ENCODE measurements at regions of chr10 and their contacts with region 1.

Region 1: DNA sequence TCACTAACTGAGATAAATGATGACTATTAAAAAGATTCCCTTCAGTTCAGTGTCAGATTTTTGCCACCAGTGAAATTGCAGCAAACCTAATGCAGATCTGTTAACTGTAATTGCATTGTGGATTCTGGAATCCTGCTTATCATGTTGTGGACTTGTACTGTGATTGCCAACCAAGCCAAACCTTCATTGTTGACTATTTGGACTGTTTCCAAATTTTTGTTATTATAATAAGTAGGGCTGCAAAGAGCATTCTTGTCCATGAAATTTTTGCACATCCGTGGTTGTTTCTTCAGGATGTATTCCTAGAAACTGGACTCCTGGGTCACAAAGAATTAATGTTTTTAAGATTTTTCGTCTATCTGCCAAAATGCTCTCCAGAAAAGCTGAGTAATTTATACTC is 281.6 kb upstream of the ZMIZ1 start:
- DNase-seq: no peak
- H3K4me3 ChIP-seq: no peak overlapping the region
- H3K27me3 ChIP-seq: no peaks in the 10 kb centered on the region
- CTCF ChIP-seq: no peak

Region 2: GRCh38 chr10:78802866-78803265 is 15.7 kb after region 1 on chr10:
- CTCF ChIA-PET with region 1: interaction called, 15 read pairs
- POLR2A ChIA-PET with region 1: interaction called, 16 read pairs
- DNase-seq: peak; percentile 60
- H3K4me3 ChIP-seq: no peak overlapping the region
- H3K27me3 ChIP-seq: peaks cover 8% of the 10 kb centered on the region
- CTCF ChIP-seq: no peak

Region 3: DNA sequence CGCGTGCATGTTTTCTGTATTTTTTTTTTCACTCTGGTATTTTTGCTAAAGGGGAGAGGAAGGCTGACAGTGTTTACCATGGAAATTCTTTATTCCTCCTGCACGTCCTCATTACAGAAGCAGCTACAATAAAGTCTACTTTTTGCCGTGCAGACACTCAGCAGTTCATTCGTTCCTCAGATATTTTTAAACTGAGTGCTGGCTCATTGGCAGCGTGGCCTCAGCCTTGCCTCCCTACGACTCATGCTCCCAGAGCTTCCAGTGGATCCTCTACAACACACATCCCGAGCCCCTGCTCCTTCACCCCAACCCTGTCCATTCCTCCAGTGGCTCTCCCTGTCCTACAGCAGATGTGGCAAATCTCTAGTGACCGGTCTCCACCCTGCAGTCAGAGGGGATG is 42.4 kb after region 1 on chr10:
- CTCF ChIA-PET with region 1: no interaction called
- POLR2A ChIA-PET with region 1: no interaction called
- DNase-seq: peak; percentile 39
- H3K4me3 ChIP-seq: no peak overlapping the region
- H3K27me3 ChIP-seq: no peaks in the 10 kb centered on the region
- CTCF ChIP-seq: no peak

Region 4: GRCh38 chr10:78944723-78945312 is 157.7 kb after region 1 on chr10:
- CTCF ChIA-PET with region 1: no interaction called
- POLR2A ChIA-PET with region 1: interaction called, 16 read pairs
- DNase-seq: peak; percentile 93
- H3K4me3 ChIP-seq: no peak overlapping the region
- H3K27me3 ChIP-seq: no peaks in the 10 kb centered on the region; the same call in 1 of the 2 replicates
- CTCF ChIP-seq: peak; percentile 33; the same call in 1 of the 2 replicates